PC-3 (cell line): ENCODE measurements at regions of chr4 and their contacts with region 1.

Region 1: DNA sequence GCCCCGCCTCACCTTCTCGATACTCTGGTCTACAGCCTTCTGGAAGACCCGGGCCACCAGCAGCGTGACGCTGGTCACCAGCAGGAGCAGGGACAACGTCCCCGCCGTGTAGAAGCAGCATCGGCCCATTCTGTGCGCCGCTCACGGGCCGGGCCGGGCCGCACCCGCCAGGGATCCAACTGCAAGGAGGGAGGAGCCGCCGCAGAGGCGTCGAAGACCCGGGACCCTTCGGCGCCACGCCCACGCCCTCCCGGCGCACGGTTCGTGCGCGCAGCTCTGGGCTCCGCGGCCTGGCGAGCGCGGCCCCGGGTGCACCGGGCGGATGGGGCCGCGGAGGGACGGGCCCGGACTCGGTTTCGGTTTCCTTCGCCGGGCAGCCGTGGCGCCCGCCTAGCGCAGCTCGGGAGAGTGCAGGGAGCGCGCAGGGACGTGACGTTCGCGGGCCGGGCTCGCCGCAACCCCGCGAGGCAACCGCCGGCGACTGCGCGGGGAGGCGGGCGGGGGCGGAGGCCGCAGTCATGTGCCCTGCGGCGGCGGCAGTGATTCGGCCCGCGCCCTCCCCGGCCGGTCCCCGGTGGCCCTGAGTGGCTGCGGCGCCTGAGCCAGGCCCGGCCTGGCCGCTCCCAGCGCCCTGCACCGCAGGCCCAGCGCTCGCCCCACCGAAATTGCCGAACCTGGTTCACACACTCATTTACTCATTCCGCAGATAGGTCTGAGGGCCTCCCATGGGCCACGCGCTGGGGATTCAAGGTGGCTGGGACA is at the start of gene SCARB2:
- DNase-seq: peak; percentile 78
- ATAC-seq: peak; percentile 78
- H3K4me3 ChIP-seq: peak within 1 kb of the TSS; percentile 90
- H3K27ac ChIP-seq: peak within 1 kb of the TSS; percentile 74
- H3K4me1 ChIP-seq: peaks cover 53% of the 10 kb centered on the region
- H3K27me3 ChIP-seq: no peaks in the 10 kb centered on the region
- CTCF ChIP-seq: no peak
- total RNA-seq, gene SCARB2: 40.6 and 56.3 TPM in 2 replicates

Region 2: DNA sequence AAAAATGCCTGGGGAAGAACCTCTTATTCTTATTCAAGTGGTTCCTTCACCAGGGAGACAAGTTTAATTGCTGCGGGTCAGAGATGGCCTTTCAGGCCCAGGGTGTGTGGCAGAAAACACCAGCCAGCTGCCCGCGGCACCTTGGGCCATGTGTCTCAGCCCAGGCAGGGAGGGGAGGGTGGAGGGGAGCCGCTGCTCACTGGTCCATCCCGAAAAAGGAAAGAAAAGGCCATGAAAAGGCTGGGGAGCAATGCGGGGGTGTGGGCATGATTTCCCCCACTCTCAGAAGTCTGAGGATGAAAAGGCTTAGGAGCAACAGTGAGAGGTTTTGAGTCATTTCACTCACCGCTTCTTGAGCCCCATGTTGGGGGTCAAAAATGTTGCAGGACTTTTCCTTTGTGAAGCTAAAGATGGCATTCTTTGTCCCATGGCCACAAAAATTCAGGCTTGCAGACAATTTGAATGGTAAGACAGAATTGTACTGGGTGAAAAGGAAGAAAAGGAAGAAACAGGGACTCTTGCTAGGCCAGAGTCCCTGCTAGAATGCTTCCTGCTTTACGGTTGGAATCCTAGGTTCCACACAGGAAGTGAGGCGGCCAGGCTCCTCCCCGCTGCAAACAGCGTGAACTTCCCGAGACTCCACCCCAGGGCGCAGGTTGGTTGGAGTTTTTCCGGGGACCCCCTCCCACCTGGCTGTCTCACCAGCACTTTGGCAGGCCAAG is 20.5 kb after region 1 on chr4:
- CTCF ChIA-PET with region 1: no interaction called
- POLR2A ChIA-PET with region 1: no interaction called
- intact Hi-C with region 1: loop called (anchors 2 kb)
- DNase-seq: no peak
- ATAC-seq: no peak
- H3K4me3 ChIP-seq: no peak overlapping the region
- H3K27ac ChIP-seq: no peak overlapping the region
- H3K4me1 ChIP-seq: peaks cover 37% of the 10 kb centered on the region
- H3K27me3 ChIP-seq: no peaks in the 10 kb centered on the region
- CTCF ChIP-seq: no peak

Region 3: GRCh38 chr4:76434901-76435526 is 221.4 kb after region 1 on chr4 and contains the start of gene SHROOM3:
- CTCF ChIA-PET with region 1: no interaction called
- POLR2A ChIA-PET with region 1: no interaction called
- intact Hi-C with region 1: no loop called
- DNase-seq: peak; percentile 35
- ATAC-seq: no peak
- H3K4me3 ChIP-seq: no peak within 1 kb of the TSS
- H3K27ac ChIP-seq: no peak within 1 kb of the TSS
- H3K4me1 ChIP-seq: 0 out of 2 replicates have a peak, but pooled peaks cover 3% of the 10 kb centered on the region
- H3K27me3 ChIP-seq: no peaks in the 10 kb centered on the region
- CTCF ChIP-seq: no peak
- total RNA-seq, gene SHROOM3: 27.8 and 28.7 TPM in 2 replicates